ENCODE measurements at regions of chr12 and their contacts with region 1.

Region 1: DNA sequence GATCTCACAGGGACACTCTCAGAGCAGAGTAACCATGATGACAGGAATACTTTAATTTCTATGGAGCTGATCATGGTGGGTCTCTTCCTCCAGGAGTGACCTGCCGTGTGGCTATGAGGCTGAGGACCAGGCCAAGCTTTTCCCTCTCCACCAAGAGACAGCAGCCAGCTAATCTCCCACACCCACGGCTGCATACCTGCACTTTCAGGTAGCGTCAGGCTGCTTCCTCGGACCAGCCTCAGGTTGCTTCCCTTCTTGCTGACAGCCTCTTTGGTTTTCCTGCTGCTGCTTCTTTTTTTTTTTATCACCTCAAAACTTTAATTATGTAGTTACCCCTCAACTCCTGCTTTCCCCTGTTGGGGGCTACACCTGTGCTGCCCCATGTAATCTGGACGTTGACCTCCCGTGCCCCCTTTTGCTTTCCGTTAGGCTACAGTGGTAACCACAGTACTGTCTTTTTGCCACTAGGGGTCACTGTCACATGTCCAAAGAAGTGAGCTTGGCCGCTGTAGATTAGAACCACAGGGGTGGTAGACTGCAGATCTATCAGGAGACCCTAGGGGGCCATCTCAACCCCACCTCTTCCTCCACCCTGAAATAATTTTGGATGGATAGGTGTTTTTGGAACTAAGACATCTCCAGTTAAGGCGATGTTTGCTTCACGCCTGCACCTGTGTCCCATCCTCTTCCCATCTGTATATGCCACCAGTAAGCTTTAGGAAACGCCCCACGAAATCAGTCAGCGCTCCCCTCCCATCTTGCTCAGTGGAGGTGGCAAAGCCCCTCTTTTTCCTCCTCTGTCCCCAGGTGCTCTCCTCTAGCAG is 7.8 kb upstream of the PIP4K2C start:
- DNase-seq: peak in 4 of 5 donors; percentile 56 to 74 (median 60)
- ATAC-seq: peak; percentile 81 to 96 (median 93)
- H3K4me3 ChIP-seq: no peak overlapping the region
- H3K27ac ChIP-seq: no peak overlapping the region
- H3K4me1 ChIP-seq: peaks cover 0 to 7% (median 0%) of the 10 kb centered on the region in 12 donors
- H3K27me3 ChIP-seq: peaks cover 0 to 22% (median 3%) of the 10 kb centered on the region in 9 donors
- CTCF ChIP-seq: peak; percentile 89 to 96 (median 95)
- POLR2A ChIP-seq: no peak

Region 2: GRCh38 chr12:57182921-57183790 is 400.1 kb before region 1 on chr12:
- intact Hi-C with region 1: no loop called
- DNase-seq: peak; percentile 61 to 84 (median 78)
- ATAC-seq: peak; percentile 52 to 83 (median 76)
- H3K4me3 ChIP-seq: no peak overlapping the region
- H3K27ac ChIP-seq: no peak overlapping the region
- H3K4me1 ChIP-seq: no peaks in the 10 kb centered on the region
- H3K27me3 ChIP-seq: no peaks in the 10 kb centered on the region
- CTCF ChIP-seq: peak; percentile 71 to 92 (median 87)
- POLR2A ChIP-seq: no peak

Region 3: DNA sequence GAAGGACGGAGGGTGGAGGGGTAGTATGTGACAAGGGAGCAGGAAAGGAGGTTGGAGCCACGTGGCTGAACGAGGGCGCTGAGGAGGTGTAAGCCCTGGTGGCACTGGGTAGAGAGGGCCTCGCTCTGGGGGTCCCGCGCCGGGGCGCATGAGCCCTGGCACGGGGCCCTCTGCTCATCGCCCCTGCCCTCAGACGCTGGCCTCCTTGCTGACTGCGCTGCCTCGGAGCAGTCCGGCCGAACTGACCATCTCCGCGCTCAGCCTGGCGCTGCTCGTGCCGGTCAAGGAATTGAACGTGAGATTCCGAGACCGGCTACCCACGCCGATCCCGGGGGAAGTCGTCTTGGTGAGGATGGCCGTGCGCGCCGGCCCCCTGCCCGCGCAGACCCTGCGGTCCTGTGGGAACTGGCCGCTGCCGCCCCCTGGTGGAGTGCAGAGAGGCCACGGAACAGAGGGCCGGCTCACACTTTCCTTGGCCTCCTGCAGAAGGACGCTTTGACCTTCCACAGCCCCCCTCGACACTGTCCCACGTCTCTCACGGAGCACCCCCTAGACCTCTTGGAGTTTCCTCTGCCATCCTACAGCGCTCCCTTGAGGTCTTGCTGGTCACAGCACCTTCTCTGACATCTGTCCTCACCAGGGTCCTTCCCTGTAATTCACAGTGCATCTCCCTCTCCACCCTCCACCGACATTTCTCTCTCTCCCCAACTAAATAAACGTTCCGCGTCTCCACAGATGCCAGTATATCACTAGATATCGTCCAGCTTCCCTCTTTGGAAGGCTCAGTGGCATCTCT is 38.5 kb after region 1 on chr12:
- intact Hi-C with region 1: loop called (anchors 1 to 5 kb)
- DNase-seq: peak in 4 of 5 donors; percentile 56 to 79 (median 73)
- ATAC-seq: peak; percentile 65 to 75 (median 70)
- H3K4me3 ChIP-seq: peak overlapping the region; percentile 20 to 66 (median 47)
- H3K27ac ChIP-seq: no peak overlapping the region
- H3K4me1 ChIP-seq: peaks cover 0 to 42% (median 17%) of the 10 kb centered on the region in 12 donors
- H3K27me3 ChIP-seq: peaks cover 6 to 72% (median 31%) of the 10 kb centered on the region in 9 donors
- CTCF ChIP-seq: peak; percentile 87 to 98 (median 94)
- POLR2A ChIP-seq: no peak

Region 4: DNA sequence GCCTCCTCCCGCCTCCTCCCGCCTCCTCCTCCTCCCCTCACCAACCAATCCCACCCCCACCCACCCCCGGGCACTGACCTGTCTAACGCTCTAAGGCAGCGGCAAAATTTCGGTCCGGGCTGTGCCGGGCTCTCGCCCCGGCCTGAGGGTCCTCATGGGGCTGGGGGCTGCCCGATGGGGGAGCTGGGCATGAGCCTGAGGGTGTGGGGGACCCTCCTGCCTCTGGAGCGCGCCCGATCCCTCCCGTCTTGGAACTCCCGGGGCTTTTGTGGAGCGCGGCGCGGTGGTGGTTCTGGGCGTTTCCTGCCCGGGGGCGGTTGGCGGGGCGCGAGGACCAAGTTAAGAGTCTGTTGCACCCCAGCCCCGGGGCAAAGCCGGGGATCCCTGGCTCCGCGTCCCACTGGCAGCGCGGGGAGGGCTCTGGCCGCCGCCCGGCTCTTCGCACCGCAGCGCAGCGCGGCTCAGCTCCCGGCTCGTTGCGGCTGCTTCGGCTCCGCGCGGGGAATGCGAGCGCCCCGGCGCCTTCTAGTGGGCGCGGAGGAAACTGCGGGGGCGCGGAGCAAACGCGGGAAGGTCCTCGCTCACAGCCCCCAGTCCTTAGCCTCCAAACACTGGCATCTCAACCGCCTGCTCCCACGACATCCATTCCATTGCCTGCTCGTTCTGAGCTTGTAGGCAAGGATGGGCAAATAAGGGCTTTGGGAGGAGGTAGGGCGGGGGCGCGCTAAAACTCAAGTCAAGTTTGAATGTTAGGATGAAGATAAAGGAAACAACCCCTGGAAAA is 49.7 kb after region 1 on chr12 and contains the start of gene B4GALNT1:
- intact Hi-C with region 1: loop called in 2 of 10 experiments (anchors 2 kb)
- DNase-seq: peak in 4 of 5 donors; percentile 46 to 79 (median 66)
- ATAC-seq: peak in 3 of 4 donors; percentile 84 to 94 (median 84)
- H3K4me3 ChIP-seq: peak within 1 kb of the TSS; percentile 46 to 71 (median 64)
- H3K27ac ChIP-seq: peak within 1 kb of the TSS in 4 of 12 donors; percentile 17 to 57 (median 44)
- H3K4me1 ChIP-seq: peaks cover 0 to 24% (median 11%) of the 10 kb centered on the region in 12 donors
- H3K27me3 ChIP-seq: peaks cover 0 to 74% (median 24%) of the 10 kb centered on the region in 9 donors
- CTCF ChIP-seq: peak; percentile 77 to 94 (median 88)
- POLR2A ChIP-seq: no peak
- total RNA-seq, gene B4GALNT1: 1.9 to 8.8 (median 5.9) TPM

Region 5: GRCh38 chr12:57693659-57694458 is 110.6 kb after region 1 on chr12 and contains the start of gene OS9:
- intact Hi-C with region 1: loop called in 2 of 10 experiments (anchors 5 to 10 kb)
- DNase-seq: peak; percentile 93 to 98 (median 97)
- ATAC-seq: peak; percentile 98 to 99 (median 99)
- H3K4me3 ChIP-seq: peak within 1 kb of the TSS; percentile 43 to 96 (median 88)
- H3K27ac ChIP-seq: peak within 1 kb of the TSS; percentile 22 to 85 (median 76)
- H3K4me1 ChIP-seq: peaks cover 0 to 15% (median 10%) of the 10 kb centered on the region in 12 donors
- H3K27me3 ChIP-seq: peaks cover 0 to 4% (median 0%) of the 10 kb centered on the region in 9 donors
- CTCF ChIP-seq: peak; percentile 64 to 91 (median 76)
- POLR2A ChIP-seq: peak in 1 of 2 donors; percentile 82
- total RNA-seq, gene OS9: 93.4 to 188 (median 130) TPM

Region 6: GRCh38 chr12:57735952-57736740 is 152.9 kb after region 1 on chr12:
- intact Hi-C with region 1: loop called in 2 of 10 experiments (anchors 10 kb)
- DNase-seq: peak; percentile 54 to 72 (median 61)
- ATAC-seq: peak; percentile 5 to 61 (median 34)
- H3K4me3 ChIP-seq: peak overlapping the region; percentile 14 to 58 (median 46)
- H3K27ac ChIP-seq: peak overlapping the region in 7 of 12 donors; percentile 0 to 77 (median 65)
- H3K4me1 ChIP-seq: peaks cover 5 to 50% (median 31%) of the 10 kb centered on the region in 12 donors
- H3K27me3 ChIP-seq: peaks cover 25 to 76% (median 39%) of the 10 kb centered on the region in 9 donors
- CTCF ChIP-seq: peak in 6 of 12 donors; percentile 10 to 44 (median 30)
- POLR2A ChIP-seq: no peak

Region 7: DNA sequence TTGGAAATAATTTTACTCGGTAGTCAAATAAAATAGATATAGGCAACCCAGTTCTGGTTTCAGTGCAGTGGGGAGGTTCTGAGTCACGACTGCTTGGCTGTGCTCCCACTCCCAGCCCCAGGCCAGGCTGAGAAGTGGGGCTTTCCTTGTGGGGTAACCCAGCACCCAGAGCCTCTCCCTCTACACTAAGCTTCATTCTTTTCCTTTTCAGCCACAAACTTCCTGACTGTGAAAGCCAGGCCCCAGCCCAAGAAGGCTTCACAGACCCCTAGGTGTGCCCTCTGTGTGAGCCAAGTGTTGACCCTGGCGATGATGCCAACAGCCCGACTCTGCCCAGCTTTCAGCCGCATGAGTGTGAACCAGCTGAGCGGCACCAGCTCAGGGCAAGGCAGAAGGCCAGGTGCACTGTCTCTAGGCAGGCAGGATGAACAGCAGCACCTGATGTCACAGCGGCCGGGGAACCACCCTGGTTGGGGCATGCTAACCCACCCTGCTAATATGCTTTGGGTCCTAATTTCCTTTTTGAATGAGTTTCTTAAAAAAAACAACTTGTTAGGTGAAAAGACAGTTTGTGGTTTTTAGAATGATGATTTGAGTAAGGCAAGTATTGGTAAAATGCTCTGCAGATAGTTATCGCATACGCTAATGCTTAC is 315.9 kb after region 1 on chr12:
- intact Hi-C with region 1: loop called in 2 of 10 experiments (anchors 5 to 10 kb)
- DNase-seq: peak in 3 of 5 donors; percentile 51 to 65 (median 53)
- ATAC-seq: peak in 3 of 4 donors; percentile 25 to 44 (median 36)
- H3K4me3 ChIP-seq: no peak overlapping the region
- H3K27ac ChIP-seq: peak overlapping the region in 11 of 12 donors; percentile 36 to 99 (median 97)
- H3K4me1 ChIP-seq: peaks cover 5 to 58% (median 48%) of the 10 kb centered on the region in 12 donors
- H3K27me3 ChIP-seq: no peaks in the 10 kb centered on the region
- CTCF ChIP-seq: no peak
- POLR2A ChIP-seq: no peak

Region 8: DNA sequence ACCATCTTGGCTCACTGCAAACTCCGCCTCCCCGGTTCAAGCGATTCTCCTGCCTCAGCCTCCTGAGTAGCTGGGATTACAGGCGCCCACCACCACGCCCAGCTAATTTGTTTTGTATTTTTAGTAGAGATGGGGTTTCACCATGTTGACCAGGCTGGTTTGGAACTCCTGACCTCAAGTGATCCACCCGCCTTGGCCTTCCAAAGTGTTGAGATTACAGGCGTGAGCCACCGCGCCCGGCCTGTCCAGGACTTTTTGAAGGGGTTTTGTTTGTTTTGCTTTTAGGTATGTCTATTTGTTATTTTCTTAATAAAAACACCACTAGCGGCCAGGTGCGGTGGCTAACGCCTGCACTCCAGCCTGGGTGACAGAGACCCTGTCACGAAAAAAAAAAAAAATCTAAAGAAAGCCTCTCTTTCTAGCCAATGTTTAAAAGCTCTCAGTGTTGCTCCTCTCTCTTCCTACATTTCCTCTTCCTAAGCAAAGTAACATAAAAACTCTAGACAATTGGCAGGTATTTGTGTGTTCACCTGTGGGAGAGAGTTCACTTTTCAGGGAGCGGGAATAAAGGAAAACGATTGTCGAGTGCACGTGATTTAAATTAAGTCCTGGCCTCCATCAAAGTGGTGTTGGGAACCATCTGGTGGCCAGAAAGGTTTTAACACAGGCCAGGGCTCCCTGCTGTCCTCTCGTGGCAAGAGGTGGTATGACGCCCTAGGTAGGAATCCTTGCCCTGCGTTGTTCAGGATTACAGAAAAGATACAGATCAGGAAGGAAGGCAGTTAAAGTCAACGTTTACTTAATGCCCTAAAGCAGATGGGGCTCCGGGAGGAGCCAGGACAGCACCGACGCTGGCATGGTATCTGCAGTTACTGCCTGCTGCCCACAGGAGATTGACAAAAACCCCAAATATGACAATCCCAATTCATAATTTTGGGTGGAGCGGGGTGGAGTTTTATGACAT is 321.9 kb after region 1 on chr12:
- intact Hi-C with region 1: loop called in 1 of 10 experiments (anchors 10 kb)
- DNase-seq: peak; percentile 78 to 86 (median 82)
- ATAC-seq: peak; percentile 72 to 94 (median 93)
- H3K4me3 ChIP-seq: peak overlapping the region in 8 of 12 donors; percentile 14 to 45 (median 30)
- H3K27ac ChIP-seq: peak overlapping the region in 2 of 12 donors; percentile 6 to 42
- H3K4me1 ChIP-seq: peaks cover 0 to 10% (median 5%) of the 10 kb centered on the region in 12 donors
- H3K27me3 ChIP-seq: peaks cover 0 to 6% (median 0%) of the 10 kb centered on the region in 9 donors
- CTCF ChIP-seq: peak; percentile 100
- POLR2A ChIP-seq: no peak

Measured in heart left ventricle (tissue), 16 donors.